Common myeloid progenitor, CD34-positive (primary cell): ENCODE measurements at regions of chr2 and their contacts with region 1.

Region 1: DNA sequence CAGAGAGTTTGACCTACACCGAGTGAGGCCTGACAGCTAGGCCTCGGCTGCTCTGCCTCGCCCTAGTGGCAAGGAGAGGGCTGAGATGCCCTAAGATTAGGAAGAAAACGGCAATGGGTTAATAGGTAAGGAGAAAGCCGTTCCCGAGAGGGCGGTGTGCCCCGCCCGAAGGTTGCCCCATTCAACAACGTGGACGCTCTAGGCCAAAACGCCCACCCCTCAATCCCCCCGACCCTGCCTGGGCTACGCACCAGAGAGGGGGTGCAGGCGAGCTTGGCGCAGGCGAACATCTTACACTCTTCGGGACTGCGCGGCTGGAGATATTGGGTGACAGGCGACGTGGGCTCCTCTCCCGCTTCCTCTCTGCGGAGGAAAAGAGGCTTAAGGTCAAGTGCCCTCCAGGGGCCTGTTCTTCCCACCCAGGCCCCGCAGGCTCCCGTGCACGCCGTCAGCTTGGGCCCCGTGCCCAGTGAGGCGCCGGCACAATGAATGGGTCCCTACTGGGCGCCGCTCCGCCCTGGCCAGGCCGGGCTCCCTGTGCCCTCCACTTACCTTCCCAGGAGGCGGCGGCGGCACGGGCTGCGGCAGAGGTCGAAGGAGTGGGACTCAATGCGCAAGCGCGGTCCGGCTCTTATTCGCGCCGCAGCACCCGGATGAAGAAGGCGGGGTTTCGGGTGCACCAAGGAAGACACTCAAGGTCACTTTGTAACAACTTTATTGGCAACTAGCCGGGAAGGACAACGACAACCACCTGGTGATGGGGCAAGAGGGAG is at the start of gene ATP5MC3:
- DNase-seq: peak; percentile 93 to 94 (median 94)
- H3K4me3 ChIP-seq: peak within 1 kb of the TSS; percentile 58 to 99 (median 86)
- H3K27ac ChIP-seq: peak within 1 kb of the TSS; percentile 88 to 94
- H3K4me1 ChIP-seq: peaks cover 9 to 20% (median 15%) of the 10 kb centered on the region in 4 experiments
- H3K27me3 ChIP-seq: no peaks in the 10 kb centered on the region

Region 2: DNA sequence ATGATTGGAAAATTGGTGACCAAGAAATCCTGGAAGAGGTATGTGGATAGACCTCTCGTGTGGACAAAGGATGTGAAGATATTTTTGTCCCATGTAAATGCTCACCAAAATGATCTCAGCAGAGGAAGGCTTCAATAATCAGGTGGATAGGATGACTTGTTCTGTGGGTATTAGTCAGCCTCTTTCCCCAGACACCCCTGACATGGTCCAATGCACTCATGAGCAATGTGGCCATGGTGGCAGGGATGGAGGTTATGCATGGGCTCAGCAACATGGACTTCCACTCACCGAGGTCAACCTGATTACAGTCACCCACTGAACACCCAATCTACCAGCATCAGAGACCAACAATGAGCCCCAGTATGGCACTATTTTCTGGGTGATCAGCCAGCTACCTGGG is 437.2 kb before region 1 on chr2:
- CTCF ChIA-PET with region 1: no interaction called
- POLR2A ChIA-PET with region 1: no interaction called
- DNase-seq: no peak
- H3K4me3 ChIP-seq: no peak overlapping the region
- H3K27ac ChIP-seq: no peak overlapping the region
- H3K4me1 ChIP-seq: no peaks in the 10 kb centered on the region
- H3K27me3 ChIP-seq: peaks cover 2 to 51% (median 13%) of the 10 kb centered on the region in 5 experiments

Region 3: GRCh38 chr2:175167792-175168563 is 13.3 kb before region 1 on chr2 and contains the start of gene ATF2:
- CTCF ChIA-PET with region 1: interaction called, 16 read pairs
- POLR2A ChIA-PET with region 1: interaction called, 11 read pairs
- DNase-seq: peak; percentile 100
- H3K4me3 ChIP-seq: peak within 1 kb of the TSS; percentile 69 to 100 (median 99)
- H3K27ac ChIP-seq: peak within 1 kb of the TSS; percentile 97 to 99
- H3K4me1 ChIP-seq: peaks cover 9 to 28% (median 17%) of the 10 kb centered on the region in 4 experiments
- H3K27me3 ChIP-seq: no peaks in the 10 kb centered on the region